SK-N-SH (cell line): ENCODE measurements at regions of chr5 and their contacts with region 1.

Region 1: GRCh38 chr5:173293817-173294672 is 34.2 kb downstream of the STC2 start:
- DNase-seq: peak; percentile 76
- H3K4me3 ChIP-seq: peak overlapping the region; percentile 18 to 42; a peak in 3 of 4 replicates
- H3K27ac ChIP-seq: no peak overlapping the region
- H3K4me1 ChIP-seq: peaks cover 0 to 32% of the 10 kb centered on the region in 2 experiments; a peak in 3 of 4 replicates
- H3K27me3 ChIP-seq: no peaks in the 10 kb centered on the region
- CTCF ChIP-seq: peak; percentile 93
- EP300 ChIP-seq: no peak
- RAD21 ChIP-seq: peak; percentile 98

Region 2: DNA sequence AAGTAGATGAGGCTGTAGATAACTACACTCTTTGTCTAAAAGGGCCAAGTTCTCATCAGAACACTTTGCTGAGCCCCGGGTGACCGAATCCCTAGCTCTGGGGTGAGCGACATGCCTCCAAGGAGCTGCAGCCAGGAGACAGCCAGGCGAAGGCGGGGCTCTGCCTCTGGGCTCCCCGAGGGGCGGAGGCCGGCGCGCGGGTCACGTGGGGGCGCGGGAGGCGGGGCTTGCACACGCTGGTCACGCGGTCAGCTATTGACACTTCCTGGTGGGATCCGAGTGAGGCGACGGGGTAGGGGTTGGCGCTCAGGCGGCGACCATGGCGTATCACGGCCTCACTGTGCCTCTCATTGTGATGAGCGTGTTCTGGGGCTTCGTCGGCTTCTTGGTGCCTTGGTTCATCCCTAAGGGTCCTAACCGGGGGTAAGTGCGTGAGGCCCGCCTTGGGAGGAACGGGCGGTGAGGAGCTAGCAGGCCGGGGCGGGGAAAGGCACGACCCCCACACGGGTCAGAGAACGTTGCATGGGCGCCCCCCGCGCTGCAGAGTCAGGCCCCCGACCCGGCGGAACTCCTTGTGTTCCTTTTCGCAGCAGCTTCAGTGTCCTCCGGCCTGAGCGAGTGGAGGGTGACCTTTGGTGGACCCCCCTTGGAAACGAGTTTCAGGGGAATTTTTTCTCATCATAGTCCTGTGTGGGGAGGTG is 310.4 kb before region 1 on chr5 and contains the start of gene ATP6V0E1:
- CTCF ChIA-PET with region 1: interaction called, 11 read pairs
- POLR2A ChIA-PET with region 1: no interaction called
- DNase-seq: peak; percentile 98
- H3K4me3 ChIP-seq: peak within 1 kb of the TSS; percentile 76 to 92
- H3K27ac ChIP-seq: peak within 1 kb of the TSS; percentile 66 to 88
- H3K4me1 ChIP-seq: 0 out of 4 replicates have a peak, but pooled peaks cover 0 to 5% of the 10 kb centered on the region in 2 experiments
- H3K27me3 ChIP-seq: no peaks in the 10 kb centered on the region
- CTCF ChIP-seq: no peak
- EP300 ChIP-seq: no peak
- RAD21 ChIP-seq: no peak
- polyA plus RNA-seq, gene ATP6V0E1: 215 and 243 TPM in 2 replicates

Region 3: DNA sequence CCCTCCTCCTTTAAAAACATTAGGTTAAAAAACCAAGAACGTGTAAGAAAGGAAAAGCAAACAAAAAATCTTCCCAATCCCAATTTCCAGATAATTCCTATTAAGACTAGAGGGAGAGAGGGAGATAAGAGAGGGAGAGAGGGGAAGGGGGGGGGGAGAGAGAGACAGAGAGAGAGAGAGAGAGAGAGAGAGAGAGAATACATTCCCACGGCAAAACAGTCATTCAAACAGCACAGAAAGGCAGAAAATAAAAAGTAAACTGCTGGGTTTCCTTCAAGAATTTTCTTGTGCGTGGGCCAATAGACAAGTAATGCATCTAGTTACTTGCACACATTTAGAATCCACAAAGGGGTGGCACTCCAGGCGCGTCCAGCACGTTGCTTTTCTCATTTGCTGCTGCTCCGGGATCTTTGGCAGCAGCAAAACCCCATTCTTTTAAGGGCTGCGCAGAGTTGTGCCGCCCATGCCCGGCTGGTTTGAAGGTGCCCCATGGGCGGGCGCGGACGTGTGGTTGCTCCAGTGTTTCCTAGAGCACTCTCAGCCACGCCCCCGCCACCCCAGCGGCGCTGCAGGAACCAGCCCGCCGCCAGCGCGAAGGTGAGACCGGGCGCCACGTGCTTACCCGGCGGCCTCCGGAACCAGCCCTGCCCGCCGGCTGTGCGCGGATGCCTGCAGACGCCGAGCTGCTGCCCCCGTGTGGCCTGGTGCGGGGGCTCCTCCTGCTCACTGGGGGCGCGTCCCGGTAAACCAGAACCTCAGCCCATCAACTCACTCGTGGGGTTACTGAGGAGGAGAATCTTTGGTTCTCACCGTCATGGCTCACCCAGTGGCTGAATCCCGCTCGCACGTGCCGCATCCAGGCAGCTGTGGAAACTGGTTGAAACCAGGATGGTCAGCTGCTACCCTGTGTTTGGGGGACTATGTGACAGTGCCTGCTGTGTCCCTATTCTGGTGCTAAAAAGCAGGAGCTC is 10.4 kb before region 1 on chr5:
- CTCF ChIA-PET with region 1: interaction called, 12 read pairs
- POLR2A ChIA-PET with region 1: no interaction called
- DNase-seq: peak; percentile 87
- H3K4me3 ChIP-seq: peak overlapping the region; percentile 19 to 36; a peak in 2 of 4 replicates
- H3K27ac ChIP-seq: no peak overlapping the region
- H3K4me1 ChIP-seq: peaks cover 0 to 7% of the 10 kb centered on the region in 2 experiments; a peak in 1 of 4 replicates
- H3K27me3 ChIP-seq: peaks cover 12% of the 10 kb centered on the region; the same call in 1 of the 2 replicates
- CTCF ChIP-seq: peak; percentile 73
- EP300 ChIP-seq: no peak
- RAD21 ChIP-seq: peak; percentile 55

Region 4: DNA sequence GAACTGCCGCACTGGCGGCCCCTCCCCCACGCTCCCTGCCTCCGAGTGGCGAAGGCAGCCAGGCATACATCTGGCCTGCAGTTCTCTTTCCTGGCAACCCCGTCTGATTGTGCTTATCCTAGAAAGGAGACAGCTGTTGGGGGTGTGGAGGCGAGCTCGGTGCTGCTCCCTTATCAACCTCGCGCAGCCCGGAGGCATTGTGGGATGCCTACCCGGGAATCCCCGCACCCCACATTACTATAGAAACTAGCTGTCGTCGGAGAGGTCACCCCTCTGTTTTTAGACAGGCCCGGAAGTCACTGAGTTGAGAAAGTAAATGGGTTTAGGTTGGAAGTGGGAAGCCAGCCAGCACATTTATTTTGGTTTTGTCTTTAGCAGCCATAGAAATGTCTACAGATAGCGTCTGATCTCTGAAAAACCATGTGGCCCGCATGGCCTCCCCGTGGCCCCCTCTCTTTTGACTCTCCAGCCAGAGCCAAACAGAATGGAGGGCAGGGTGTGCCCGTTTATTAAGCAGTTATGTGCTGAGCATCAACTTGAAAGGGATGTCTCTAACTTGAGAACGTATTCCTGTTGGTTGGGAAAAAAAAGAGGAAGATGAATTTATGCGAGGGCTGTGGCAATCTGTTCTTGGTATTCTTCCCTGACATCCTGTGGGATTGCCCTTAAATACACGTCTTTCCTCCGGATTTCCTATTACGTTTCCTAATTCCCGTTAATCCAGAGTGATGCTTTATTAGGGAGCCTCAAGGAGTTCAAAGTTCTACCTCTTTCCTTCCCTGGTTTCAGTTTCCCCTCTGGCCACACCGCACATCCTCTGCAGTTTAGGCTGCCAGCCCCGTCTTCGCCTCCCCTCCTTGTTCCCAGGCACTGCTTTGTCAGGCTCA is 30.3 kb after region 1 on chr5:
- CTCF ChIA-PET with region 1: interaction called, 503 read pairs
- POLR2A ChIA-PET with region 1: interaction called, 15 read pairs
- DNase-seq: peak; percentile 94
- H3K4me3 ChIP-seq: no peak overlapping the region; a peak in 2 of 4 replicates
- H3K27ac ChIP-seq: peak overlapping the region in 1 of 2 experiments; percentile 97; a peak in 3 of 4 replicates
- H3K4me1 ChIP-seq: peaks cover 17 to 56% of the 10 kb centered on the region in 2 experiments; a peak in 3 of 4 replicates
- H3K27me3 ChIP-seq: no peaks in the 10 kb centered on the region
- CTCF ChIP-seq: no peak
- EP300 ChIP-seq: peak in 1 of 2 experiments; percentile 87; a peak in 2 of 4 replicates
- RAD21 ChIP-seq: no peak

Region 5: GRCh38 chr5:173573126-173573960 is 279.3 kb after region 1 on chr5:
- CTCF ChIA-PET with region 1: interaction called, 41 read pairs
- POLR2A ChIA-PET with region 1: no interaction called
- DNase-seq: peak; percentile 89
- H3K4me3 ChIP-seq: peak overlapping the region; percentile 31 to 55; a peak in 3 of 4 replicates
- H3K27ac ChIP-seq: no peak overlapping the region
- H3K4me1 ChIP-seq: peaks cover 0 to 6% of the 10 kb centered on the region in 2 experiments; a peak in 1 of 4 replicates
- H3K27me3 ChIP-seq: no peaks in the 10 kb centered on the region
- CTCF ChIP-seq: peak; percentile 94
- EP300 ChIP-seq: 0 out of 4 replicates have a peak, but pooled peaks of 1 of the 2 experiments have one; percentile 15
- RAD21 ChIP-seq: peak; percentile 73

Region 6: DNA sequence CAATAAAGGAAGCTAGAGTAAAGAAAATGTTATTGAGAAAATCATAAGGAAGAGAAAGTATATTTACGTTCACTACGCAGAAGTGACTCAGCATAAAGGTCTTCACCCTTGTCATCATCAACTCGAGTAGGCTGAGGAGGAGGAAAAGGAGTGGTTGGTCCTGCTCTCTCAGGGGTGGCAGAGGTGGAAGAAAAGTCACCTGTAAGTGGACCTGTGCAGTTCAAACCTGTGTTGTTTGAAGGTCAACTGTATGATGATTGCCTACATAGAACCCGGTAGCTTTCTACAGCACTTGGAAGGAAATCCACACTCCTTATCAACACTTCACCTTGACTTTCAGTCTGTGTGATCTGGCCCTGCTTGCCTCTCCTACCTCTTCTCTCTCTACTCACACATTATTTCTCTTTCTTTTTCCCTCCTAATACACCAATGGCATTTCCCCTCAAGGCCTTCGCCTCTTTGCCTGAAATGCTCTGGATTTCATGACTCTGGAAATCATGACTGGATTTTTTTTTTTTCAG is 484.8 kb after region 1 on chr5:
- CTCF ChIA-PET with region 1: no interaction called
- POLR2A ChIA-PET with region 1: no interaction called
- DNase-seq: no peak
- H3K4me3 ChIP-seq: no peak overlapping the region
- H3K27ac ChIP-seq: no peak overlapping the region; a peak in 1 of 4 replicates
- H3K4me1 ChIP-seq: peaks cover 6 to 40% of the 10 kb centered on the region in 2 experiments; a peak in 3 of 4 replicates
- H3K27me3 ChIP-seq: no peaks in the 10 kb centered on the region
- CTCF ChIP-seq: no peak
- EP300 ChIP-seq: no peak
- RAD21 ChIP-seq: no peak

Region 7: GRCh38 chr5:173972925-173973615 is 679.0 kb after region 1 on chr5:
- CTCF ChIA-PET with region 1: no interaction called
- POLR2A ChIA-PET with region 1: no interaction called
- DNase-seq: peak; percentile 91
- H3K4me3 ChIP-seq: peak overlapping the region in 1 of 2 experiments; percentile 33; a peak in 2 of 4 replicates
- H3K27ac ChIP-seq: no peak overlapping the region
- H3K4me1 ChIP-seq: peaks cover 0 to 8% of the 10 kb centered on the region in 2 experiments; a peak in 1 of 4 replicates
- H3K27me3 ChIP-seq: no peaks in the 10 kb centered on the region
- CTCF ChIP-seq: peak; percentile 83
- EP300 ChIP-seq: no peak
- RAD21 ChIP-seq: peak; percentile 96